CD8-positive, alpha-beta memory T cell (primary cell): ENCODE measurements at regions of chr14 and their contacts with region 1.

Region 1: DNA sequence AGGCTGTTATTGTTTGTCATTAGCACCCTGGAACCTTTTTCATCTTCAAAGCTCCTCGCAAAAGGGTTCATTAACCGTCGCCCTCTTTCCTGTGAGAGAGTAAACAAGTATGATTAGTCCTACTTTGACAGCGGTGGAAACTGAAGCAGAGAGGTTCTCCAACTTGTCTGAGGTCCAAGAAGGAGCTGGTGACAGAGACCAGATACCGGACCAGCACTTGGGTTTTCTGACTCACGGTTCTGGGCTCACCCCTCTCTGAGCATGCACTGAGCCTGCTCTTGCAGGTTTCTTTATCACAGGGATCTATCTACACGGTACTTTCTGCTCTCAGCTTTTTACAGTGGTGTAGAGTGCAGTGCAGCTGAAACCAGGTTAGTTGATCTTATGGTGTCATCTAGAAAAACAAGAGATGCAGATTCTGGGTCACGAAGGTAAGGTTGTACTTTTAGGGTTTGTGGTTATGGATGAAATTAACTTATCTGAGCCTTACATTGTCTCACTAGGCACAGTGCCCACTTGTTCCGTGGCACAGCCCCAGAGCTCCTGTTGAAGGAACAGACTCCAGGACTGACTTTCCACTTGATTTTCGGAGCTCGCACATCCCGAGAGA is 62.1 kb downstream of the PPP2R5C start:
- DNase-seq: peak; percentile 51 to 86 (median 77)
- H3K4me3 ChIP-seq: peak overlapping the region; percentile 87
- H3K4me3 Mint-ChIP-seq: peak overlapping the region; percentile 90 to 94 (median 93)
- H3K27ac ChIP-seq: peak overlapping the region; percentile 96
- H3K27ac Mint-ChIP-seq: peak overlapping the region; percentile 95 to 99 (median 98)
- H3K4me1 ChIP-seq: peaks cover 80% of the 10 kb centered on the region
- H3K4me1 Mint-ChIP-seq: peaks cover 79 to 89% (median 80%) of the 10 kb centered on the region in 3 donors
- H3K27me3 ChIP-seq: no peaks in the 10 kb centered on the region
- H3K27me3 Mint-ChIP-seq: peaks cover 0 to 16% of the 10 kb centered on the region in 2 donors

Region 2: DNA sequence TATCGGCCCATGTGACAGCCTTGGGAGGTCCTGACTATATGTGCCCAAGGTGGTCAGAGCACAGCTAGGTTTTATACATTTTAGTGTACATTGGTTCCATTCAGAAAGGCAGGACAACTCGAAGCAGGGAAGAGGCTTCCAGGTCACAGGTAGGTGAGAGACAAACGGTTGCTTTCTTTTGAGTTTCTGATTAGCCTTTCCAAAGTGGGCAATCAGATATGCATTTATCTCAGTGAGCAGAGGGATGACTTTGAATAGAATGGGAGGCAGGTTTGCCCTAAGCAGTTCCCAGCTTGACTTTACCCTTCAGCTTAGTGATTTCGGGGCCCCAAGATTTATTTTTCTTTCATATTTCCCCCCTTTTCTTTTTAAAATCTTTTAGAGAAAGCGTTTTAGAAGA is 149.7 kb before region 1 on chr14:
- CTCF ChIA-PET with region 1: no interaction called
- POLR2A ChIA-PET with region 1: no interaction called
- DNase-seq: no peak
- H3K4me3 ChIP-seq: no peak overlapping the region
- H3K4me3 Mint-ChIP-seq: no peak overlapping the region
- H3K27ac ChIP-seq: no peak overlapping the region
- H3K27ac Mint-ChIP-seq: no peak overlapping the region
- H3K4me1 ChIP-seq: no peaks in the 10 kb centered on the region
- H3K4me1 Mint-ChIP-seq: no peaks in the 10 kb centered on the region
- H3K27me3 ChIP-seq: no peaks in the 10 kb centered on the region
- H3K27me3 Mint-ChIP-seq: peaks cover 11 to 24% of the 10 kb centered on the region in 2 donors

Region 3: DNA sequence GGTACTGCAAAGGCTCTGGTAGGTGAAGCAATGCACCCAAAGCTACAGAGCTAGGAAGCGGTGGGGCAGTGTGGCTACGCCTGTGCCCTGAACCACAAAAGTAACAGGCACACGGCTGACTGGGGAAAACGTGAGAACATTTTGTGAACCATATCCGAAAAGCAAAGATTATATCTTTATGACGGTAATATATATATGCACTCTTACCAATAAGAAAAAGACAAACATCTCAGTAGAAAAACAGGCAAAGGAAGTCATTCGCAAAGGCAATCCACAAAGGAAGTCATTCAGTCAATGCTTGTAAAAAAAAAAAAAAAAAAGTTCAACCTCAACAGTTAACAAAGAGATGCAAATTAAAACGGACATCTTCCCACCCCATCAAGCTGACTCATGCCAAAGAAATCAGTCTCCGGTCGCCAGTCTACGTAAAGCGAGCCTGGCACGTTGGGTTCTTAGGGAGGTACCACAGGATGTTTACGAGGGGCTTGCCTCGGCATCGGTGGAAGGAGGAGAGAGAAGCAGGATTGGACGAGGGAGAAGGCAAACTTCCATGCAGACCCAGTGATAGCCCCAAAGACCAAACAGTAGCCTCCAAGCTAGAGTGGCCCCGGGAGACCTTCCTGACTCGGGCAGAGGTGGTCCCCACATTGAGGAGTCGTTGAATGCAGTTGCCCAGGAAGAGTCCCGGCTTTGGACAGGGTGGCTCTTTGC is 101.5 kb before region 1 on chr14:
- CTCF ChIA-PET with region 1: interaction called, 5 read pairs
- POLR2A ChIA-PET with region 1: interaction called, 10 read pairs
- DNase-seq: peak; percentile 70 to 93 (median 89)
- H3K4me3 ChIP-seq: peak overlapping the region; percentile 42
- H3K4me3 Mint-ChIP-seq: peak overlapping the region; percentile 64 to 87 (median 78)
- H3K27ac ChIP-seq: peak overlapping the region; percentile 88
- H3K27ac Mint-ChIP-seq: peak overlapping the region; percentile 95 to 99 (median 97)
- H3K4me1 ChIP-seq: peaks cover 56% of the 10 kb centered on the region
- H3K4me1 Mint-ChIP-seq: peaks cover 52 to 79% (median 77%) of the 10 kb centered on the region in 3 donors
- H3K27me3 ChIP-seq: no peaks in the 10 kb centered on the region
- H3K27me3 Mint-ChIP-seq: peaks cover 0 to 2% of the 10 kb centered on the region in 2 donors

Region 4: DNA sequence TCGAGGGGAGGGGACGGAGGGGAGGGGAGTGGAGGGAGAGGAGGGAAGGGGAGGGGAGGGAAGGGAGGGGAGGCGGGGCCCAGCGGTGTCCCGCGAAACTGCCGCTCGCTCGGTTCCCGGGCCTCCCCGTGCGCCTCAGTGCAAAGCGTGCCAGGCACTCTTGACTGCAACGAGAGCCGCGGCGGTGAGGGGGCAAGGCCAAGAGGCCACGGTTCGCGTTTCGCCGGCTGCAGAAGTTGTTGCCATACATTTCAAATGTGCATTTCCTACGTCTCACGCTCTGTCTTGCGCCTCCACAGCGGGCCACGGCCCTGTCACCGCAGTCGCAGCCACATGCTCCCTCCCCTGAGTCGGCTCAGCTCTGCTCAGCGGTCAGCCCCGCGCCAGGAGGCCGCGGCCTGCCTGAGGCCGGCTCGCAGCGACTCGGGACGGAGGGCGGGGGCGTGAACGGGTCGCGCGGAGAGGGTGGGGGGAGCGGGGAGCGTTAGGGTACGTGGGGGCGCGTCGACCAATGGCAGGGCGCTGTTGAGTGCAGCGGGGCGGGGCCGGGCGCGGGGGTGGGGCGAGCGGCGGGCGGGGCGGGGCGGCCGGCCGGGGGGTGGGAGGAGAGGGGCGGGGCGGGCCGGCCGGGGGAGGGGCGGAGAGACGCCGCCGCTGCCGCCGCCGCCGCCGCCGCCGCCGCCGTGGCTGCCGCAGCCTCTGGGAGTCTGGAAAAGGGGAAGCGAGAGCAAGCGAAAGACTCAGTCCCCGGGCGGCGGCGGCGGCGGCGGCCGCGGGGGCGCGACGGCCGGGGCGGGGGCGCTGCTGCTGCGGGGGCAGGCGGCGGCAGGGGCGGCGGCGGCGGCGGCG is 62.4 kb before region 1 on chr14 and contains the start of gene PPP2R5C:
- CTCF ChIA-PET with region 1: interaction called, 6 read pairs
- POLR2A ChIA-PET with region 1: interaction called, 15 read pairs
- DNase-seq: peak; percentile 85 to 93 (median 87)
- H3K4me3 ChIP-seq: peak within 1 kb of the TSS; percentile 93
- H3K4me3 Mint-ChIP-seq: peak within 1 kb of the TSS; percentile 92 to 100 (median 97)
- H3K27ac ChIP-seq: peak within 1 kb of the TSS; percentile 75
- H3K27ac Mint-ChIP-seq: peak within 1 kb of the TSS; percentile 87 to 98 (median 96)
- H3K4me1 ChIP-seq: peaks cover 34% of the 10 kb centered on the region
- H3K4me1 Mint-ChIP-seq: peaks cover 38 to 64% (median 44%) of the 10 kb centered on the region in 3 donors
- H3K27me3 ChIP-seq: no peaks in the 10 kb centered on the region
- H3K27me3 Mint-ChIP-seq: peaks cover 0 to 4% of the 10 kb centered on the region in 2 donors
- total RNA-seq, gene PPP2R5C: 278 to 307 TPM

Region 5: GRCh38 chr14:101767618-101768362 is 55.8 kb before region 1 on chr14:
- CTCF ChIA-PET with region 1: interaction called, 39 read pairs
- POLR2A ChIA-PET with region 1: interaction called, 15 read pairs
- DNase-seq: no peak
- H3K4me3 ChIP-seq: no peak overlapping the region
- H3K4me3 Mint-ChIP-seq: no peak overlapping the region
- H3K27ac ChIP-seq: no peak overlapping the region
- H3K27ac Mint-ChIP-seq: peak overlapping the region in 4 of 8 donors; percentile 36 to 85 (median 44)
- H3K4me1 ChIP-seq: peaks cover 30% of the 10 kb centered on the region
- H3K4me1 Mint-ChIP-seq: peaks cover 34 to 75% (median 46%) of the 10 kb centered on the region in 3 donors
- H3K27me3 ChIP-seq: no peaks in the 10 kb centered on the region
- H3K27me3 Mint-ChIP-seq: peaks cover 0 to 3% of the 10 kb centered on the region in 2 donors

Region 6: DNA sequence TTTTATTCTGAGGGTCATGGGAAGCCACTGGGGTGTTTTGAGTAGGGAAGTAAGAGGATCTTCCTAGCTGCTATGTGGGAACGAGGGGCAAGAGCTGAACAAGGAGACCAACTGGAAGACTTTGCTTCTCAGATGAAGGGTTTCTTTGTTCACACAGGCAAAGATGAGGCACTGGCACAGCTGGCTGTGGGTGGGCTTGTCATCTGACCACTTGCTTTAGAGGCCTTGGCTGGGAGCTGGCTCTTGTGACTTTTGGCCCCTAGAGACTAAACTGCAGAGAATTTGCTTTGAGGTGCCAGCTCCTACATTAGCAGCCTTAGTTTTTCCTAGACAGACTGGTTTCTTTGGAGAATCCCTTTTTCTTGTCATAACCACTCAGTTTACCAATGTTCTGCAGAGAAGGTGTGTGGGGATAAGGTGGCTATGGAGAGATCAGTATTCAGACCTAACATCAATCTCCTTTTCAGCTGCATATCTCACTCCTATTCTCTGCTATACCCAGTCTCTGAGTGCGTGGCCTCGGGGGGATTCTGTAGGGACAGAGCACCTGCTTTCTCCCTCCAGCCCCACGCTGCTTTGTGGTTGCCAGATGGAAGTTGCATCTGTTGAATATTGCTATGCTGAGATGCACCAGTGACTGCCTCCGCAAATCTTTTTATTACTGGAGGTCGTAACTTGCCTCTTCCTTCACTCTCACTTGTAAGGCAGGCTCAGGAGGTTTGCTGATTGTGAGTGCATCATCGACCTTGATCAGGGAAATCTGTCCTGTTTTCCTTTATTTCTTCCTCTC is 49.4 kb before region 1 on chr14:
- CTCF ChIA-PET with region 1: interaction called, 39 read pairs
- POLR2A ChIA-PET with region 1: interaction called, 11 read pairs
- DNase-seq: no peak
- H3K4me3 ChIP-seq: no peak overlapping the region
- H3K4me3 Mint-ChIP-seq: no peak overlapping the region
- H3K27ac ChIP-seq: no peak overlapping the region
- H3K27ac Mint-ChIP-seq: peak overlapping the region in 7 of 8 donors; percentile 39 to 74 (median 67)
- H3K4me1 ChIP-seq: peaks cover 7% of the 10 kb centered on the region
- H3K4me1 Mint-ChIP-seq: peaks cover 37 to 76% (median 45%) of the 10 kb centered on the region in 3 donors
- H3K27me3 ChIP-seq: no peaks in the 10 kb centered on the region
- H3K27me3 Mint-ChIP-seq: no peaks in the 10 kb centered on the region

Region 7: DNA sequence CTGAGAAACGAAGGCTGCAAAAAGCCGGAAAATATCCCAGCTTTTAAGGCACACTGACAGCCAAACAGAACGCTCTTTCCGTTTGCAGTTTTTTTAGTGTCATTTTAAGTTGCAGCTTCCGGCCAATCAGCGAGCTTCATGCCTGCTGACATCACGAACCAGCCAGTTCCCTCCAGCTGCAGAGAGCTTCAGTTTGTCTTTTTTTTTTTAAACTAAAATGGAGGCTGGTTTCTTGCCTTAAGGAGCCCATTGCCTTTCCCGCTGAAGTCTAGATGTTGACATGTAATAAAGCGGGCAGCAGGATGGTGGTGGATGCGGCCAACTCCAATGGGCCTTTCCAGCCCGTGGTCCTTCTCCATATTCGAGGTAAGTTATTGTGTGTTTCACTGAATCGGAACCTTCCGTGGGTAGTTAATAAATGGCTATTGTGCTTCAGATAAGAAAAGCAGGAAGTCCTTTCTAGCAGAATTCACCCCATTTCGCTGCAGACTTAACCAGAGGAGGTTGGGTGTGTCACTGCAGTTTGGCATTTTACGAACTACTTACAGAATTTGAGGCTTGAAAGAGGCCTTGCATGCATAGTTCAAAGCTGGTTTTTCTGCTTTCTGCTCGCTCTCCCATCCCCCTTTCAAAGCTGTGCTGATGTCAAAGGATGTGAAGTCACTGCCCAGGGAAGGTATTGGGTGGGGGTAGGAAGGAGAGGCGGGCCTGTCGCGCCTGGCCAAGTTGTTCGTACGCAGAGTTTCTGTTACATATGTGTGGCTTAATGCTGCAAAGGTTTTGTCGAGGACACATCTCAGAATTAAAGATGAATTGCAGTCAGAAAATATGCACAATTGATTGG is 13.7 kb before region 1 on chr14:
- CTCF ChIA-PET with region 1: interaction called, 95 read pairs
- POLR2A ChIA-PET with region 1: interaction called, 279 read pairs
- DNase-seq: peak; percentile 71 to 94 (median 92)
- H3K4me3 ChIP-seq: peak overlapping the region; percentile 94
- H3K4me3 Mint-ChIP-seq: peak overlapping the region; percentile 90 to 99 (median 95)
- H3K27ac ChIP-seq: peak overlapping the region; percentile 99
- H3K27ac Mint-ChIP-seq: peak overlapping the region; percentile 89 to 100 (median 98)
- H3K4me1 ChIP-seq: peaks cover 36% of the 10 kb centered on the region
- H3K4me1 Mint-ChIP-seq: peaks cover 45 to 71% (median 58%) of the 10 kb centered on the region in 3 donors
- H3K27me3 ChIP-seq: no peaks in the 10 kb centered on the region
- H3K27me3 Mint-ChIP-seq: peaks cover 0 to 2% of the 10 kb centered on the region in 2 donors

Region 8: DNA sequence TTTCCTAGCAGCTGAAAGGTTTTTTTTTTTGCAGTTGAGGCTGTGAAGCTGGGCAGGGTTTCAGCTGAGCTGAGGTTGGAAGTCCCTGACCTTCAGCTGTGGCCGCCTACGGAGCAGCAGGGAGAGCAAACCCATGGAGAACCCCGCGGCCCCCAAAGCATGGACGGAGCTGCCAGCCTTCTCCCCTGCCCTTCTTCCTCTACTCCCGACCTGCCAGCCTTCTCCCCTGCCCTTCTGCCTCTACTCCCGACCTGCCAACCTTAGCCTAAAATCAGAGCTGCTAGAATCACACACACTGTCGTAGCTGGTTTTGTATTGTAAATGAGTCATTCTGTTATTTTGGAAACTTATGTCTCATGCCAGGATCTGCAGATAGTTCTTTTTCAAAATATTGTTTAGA is 12.5 kb after region 1 on chr14:
- CTCF ChIA-PET with region 1: interaction called, 7 read pairs
- POLR2A ChIA-PET with region 1: interaction called, 279 read pairs
- DNase-seq: no peak
- H3K4me3 ChIP-seq: no peak overlapping the region
- H3K4me3 Mint-ChIP-seq: peak overlapping the region in 5 of 7 donors; percentile 47 to 82 (median 74)
- H3K27ac ChIP-seq: no peak overlapping the region
- H3K27ac Mint-ChIP-seq: peak overlapping the region; percentile 73 to 96 (median 89)
- H3K4me1 ChIP-seq: peaks cover 93% of the 10 kb centered on the region
- H3K4me1 Mint-ChIP-seq: peaks cover 87 to 99% (median 94%) of the 10 kb centered on the region in 3 donors
- H3K27me3 ChIP-seq: no peaks in the 10 kb centered on the region
- H3K27me3 Mint-ChIP-seq: peaks cover 0 to 4% of the 10 kb centered on the region in 2 donors